AG04450 (cell line): ENCODE measurements at regions of chr19 and their contacts with region 1.

Region 1: DNA sequence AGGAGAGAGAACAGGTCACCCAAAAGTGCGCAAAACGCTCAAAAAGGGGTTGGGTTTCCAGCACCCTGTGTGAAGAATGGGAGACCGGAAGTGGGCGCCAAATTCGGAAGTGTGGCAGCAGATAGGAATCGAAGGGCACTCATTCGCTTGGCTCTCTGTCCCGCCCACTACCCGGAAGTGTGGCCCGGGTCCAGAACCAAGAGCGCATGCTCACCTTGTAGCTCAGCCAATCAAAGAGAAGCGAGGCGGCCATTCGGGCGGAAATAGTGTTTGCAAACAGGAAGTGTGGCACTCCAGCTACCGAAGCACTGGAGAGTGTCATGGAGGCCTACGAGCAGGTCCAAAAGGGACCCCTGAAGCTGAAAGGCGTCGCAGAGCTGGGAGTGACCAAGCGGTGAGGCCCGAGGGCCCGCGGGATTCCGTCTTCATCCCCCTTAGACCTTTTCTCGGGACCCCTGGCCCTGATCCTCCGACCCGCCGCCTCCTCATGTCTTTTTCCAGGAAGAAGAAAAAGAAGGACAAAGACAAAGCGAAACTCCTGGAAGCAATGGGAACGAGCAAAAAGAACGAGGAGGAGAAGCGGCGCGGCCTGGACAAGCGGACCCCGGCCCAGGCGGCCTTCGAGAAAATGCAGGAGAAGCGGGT is at the start of gene FAM32A:
- DNase-seq: peak; percentile 98
- H3K4me3 ChIP-seq: peak within 1 kb of the TSS; percentile 94
- H3K27ac ChIP-seq: peak within 1 kb of the TSS; percentile 57
- H3K27me3 ChIP-seq: no peaks in the 10 kb centered on the region
- CTCF ChIP-seq: no peak
- polyA plus RNA-seq, gene FAM32A: 164 and 177 TPM in 2 replicates

Region 2: GRCh38 chr19:16070366-16070990 is 114.8 kb before region 1 on chr19:
- CTCF ChIA-PET with region 1: interaction called, 4 read pairs
- POLR2A ChIA-PET with region 1: interaction called, 10 read pairs
- DNase-seq: no peak
- H3K4me3 ChIP-seq: peak overlapping the region; percentile 90
- H3K27ac ChIP-seq: peak overlapping the region; percentile 47
- H3K27me3 ChIP-seq: no peaks in the 10 kb centered on the region
- CTCF ChIP-seq: no peak

Region 3: GRCh38 chr19:16111160-16111908 is 73.9 kb before region 1 on chr19 and contains the start of gene RAB8A:
- CTCF ChIA-PET with region 1: interaction called, 11 read pairs
- POLR2A ChIA-PET with region 1: interaction called, 4 read pairs
- DNase-seq: peak; percentile 98
- H3K4me3 ChIP-seq: peak within 1 kb of the TSS; percentile 95
- H3K27ac ChIP-seq: peak within 1 kb of the TSS; percentile 65
- H3K27me3 ChIP-seq: no peaks in the 10 kb centered on the region
- CTCF ChIP-seq: peak; percentile 78
- polyA plus RNA-seq, gene RAB8A: 107 and 109 TPM in 2 replicates

Region 4: DNA sequence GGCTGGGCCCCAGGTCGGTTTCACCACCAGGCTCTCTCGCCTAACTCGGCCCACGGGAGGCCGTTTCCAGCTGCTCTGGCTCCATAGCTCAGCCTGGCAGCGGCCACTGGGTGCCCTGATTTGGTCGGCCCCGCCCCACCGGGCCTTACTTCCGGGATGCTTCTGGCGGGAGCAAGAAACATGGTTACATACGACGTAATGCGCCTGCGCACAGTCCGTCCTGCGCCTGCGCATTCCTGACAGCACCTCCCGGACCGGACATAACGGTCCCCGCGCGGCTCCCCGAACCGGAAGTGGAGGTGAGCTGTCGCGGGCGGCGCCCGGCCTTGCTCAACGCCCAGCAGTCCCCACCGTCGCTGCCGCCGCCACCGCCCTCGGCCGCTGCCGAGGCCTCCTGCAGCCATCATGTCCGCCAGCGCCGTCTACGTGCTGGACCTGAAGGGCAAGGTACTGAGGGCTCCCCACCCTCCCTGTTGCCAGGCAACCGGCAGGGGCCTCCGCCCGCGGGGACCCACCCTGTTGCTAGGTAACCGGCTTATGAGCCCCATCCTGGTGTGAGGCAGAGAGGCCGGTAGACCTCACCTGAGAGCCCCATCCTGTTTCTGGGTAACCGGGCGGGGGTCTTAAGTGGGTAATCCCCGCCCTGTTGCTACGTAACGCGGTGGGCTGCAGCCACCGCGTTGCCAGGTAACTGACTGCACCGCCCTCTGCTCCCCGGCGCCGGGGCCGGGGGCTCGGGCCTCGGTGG is 12.6 kb after region 1 on chr19 and contains the start of gene AP1M1:
- CTCF ChIA-PET with region 1: interaction called, 23 read pairs
- POLR2A ChIA-PET with region 1: interaction called, 11 read pairs
- DNase-seq: peak; percentile 95
- H3K4me3 ChIP-seq: peak within 1 kb of the TSS; percentile 98
- H3K27ac ChIP-seq: peak within 1 kb of the TSS; percentile 90
- H3K27me3 ChIP-seq: no peaks in the 10 kb centered on the region
- CTCF ChIP-seq: no peak
- polyA plus RNA-seq, gene AP1M1: 42.5 and 54.3 TPM in 2 replicates